ENCODE measurements at regions of chr6 and their contacts with region 1.

Region 1: DNA sequence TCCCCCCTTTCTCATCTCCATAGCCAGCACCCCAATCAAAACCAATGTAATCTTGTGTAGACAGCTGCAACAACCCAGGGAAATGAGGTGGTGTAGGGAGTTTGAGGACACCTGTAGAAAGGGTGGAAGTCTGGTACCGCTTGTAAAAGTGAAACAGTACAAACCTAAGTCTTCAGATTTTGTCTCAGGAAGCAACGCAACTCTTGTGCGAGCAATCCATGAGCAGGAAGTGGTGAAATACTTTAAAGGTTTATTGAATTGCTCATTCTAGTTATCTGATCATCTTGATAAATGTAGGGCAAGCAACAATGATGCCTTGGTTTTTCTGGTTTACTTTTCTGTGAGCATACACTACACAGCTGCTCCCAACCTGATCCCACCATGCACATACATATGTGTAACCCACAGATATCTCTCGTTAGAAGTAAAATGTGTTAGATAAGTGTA is 71.1 kb upstream of the THEMIS start:
- DNase-seq: peak; percentile 24 to 91 (median 53)
- ATAC-seq: peak; percentile 85
- H3K4me3 ChIP-seq: peak overlapping the region; percentile 35 to 55
- H3K4me3 Mint-ChIP-seq: peak overlapping the region; percentile 84
- H3K27ac ChIP-seq: peak overlapping the region; percentile 79 to 85
- H3K27ac Mint-ChIP-seq: peak overlapping the region; percentile 97
- H3K4me1 ChIP-seq: peaks cover 80% of the 10 kb centered on the region
- H3K4me1 Mint-ChIP-seq: peaks cover 83% of the 10 kb centered on the region
- H3K27me3 ChIP-seq: no peaks in the 10 kb centered on the region
- H3K27me3 Mint-ChIP-seq: no peaks in the 10 kb centered on the region
- CTCF ChIP-seq: no peak

Region 2: DNA sequence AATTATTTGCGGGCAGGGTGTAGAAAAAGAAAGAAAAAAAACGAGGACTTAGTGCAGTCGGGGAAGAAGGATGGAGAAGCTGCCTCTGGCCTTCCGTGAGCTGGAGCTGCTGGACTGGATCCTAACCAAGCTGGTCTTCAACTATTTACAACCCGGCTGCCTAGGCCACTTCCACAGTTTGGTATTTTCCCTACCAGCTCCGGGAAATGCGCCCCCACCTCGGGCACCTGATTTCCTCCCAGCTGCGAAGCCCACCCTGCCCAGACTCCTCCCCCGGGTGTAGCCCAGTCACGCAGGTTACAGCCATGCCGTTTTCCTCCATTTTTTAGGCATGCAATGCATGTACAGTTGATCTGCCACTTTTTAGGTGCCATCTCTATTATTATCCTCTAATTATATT is 92.3 kb before region 1 on chr6:
- CTCF ChIA-PET with region 1: no interaction called
- POLR2A ChIA-PET with region 1: no interaction called
- intact Hi-C with region 1: loop called in 1 of 2 experiments (anchors 5 kb)
- DNase-seq: peak in 6 of 9 experiments; percentile 21 to 71 (median 46)
- ATAC-seq: peak; percentile 60
- H3K4me3 ChIP-seq: peak overlapping the region; percentile 19 to 24
- H3K4me3 Mint-ChIP-seq: peak overlapping the region; percentile 72
- H3K27ac ChIP-seq: peak overlapping the region in 1 of 2 experiments; percentile 40
- H3K27ac Mint-ChIP-seq: peak overlapping the region; percentile 88
- H3K4me1 ChIP-seq: peaks cover 84% of the 10 kb centered on the region
- H3K4me1 Mint-ChIP-seq: peaks cover 84% of the 10 kb centered on the region
- H3K27me3 ChIP-seq: no peaks in the 10 kb centered on the region
- H3K27me3 Mint-ChIP-seq: no peaks in the 10 kb centered on the region
- CTCF ChIP-seq: no peak

Region 3: GRCh38 chr6:127907960-127908640 is 63.9 kb before region 1 on chr6:
- CTCF ChIA-PET with region 1: interaction called, 3 read pairs
- POLR2A ChIA-PET with region 1: interaction called, 15 read pairs
- intact Hi-C with region 1: no loop called
- DNase-seq: peak in 2 of 9 experiments; percentile 48 to 66
- ATAC-seq: peak; percentile 69
- H3K4me3 ChIP-seq: peak overlapping the region; percentile 25 to 52
- H3K4me3 Mint-ChIP-seq: peak overlapping the region; percentile 80
- H3K27ac ChIP-seq: peak overlapping the region; percentile 42 to 88
- H3K27ac Mint-ChIP-seq: peak overlapping the region; percentile 88
- H3K4me1 ChIP-seq: peaks cover 24% of the 10 kb centered on the region
- H3K4me1 Mint-ChIP-seq: peaks cover 68% of the 10 kb centered on the region
- H3K27me3 ChIP-seq: no peaks in the 10 kb centered on the region
- H3K27me3 Mint-ChIP-seq: no peaks in the 10 kb centered on the region
- CTCF ChIP-seq: no peak

Region 4: GRCh38 chr6:127938701-127939100 is 33.3 kb before region 1 on chr6:
- CTCF ChIA-PET with region 1: interaction called, 3 read pairs
- POLR2A ChIA-PET with region 1: interaction called, 4 read pairs
- intact Hi-C with region 1: loop called (anchors 1 to 5 kb)
- DNase-seq: peak in 2 of 9 experiments; percentile 39 to 61
- ATAC-seq: no peak
- H3K4me3 ChIP-seq: no peak overlapping the region
- H3K4me3 Mint-ChIP-seq: no peak overlapping the region
- H3K27ac ChIP-seq: no peak overlapping the region
- H3K27ac Mint-ChIP-seq: peak overlapping the region; percentile 10
- H3K4me1 ChIP-seq: peaks cover 54% of the 10 kb centered on the region
- H3K4me1 Mint-ChIP-seq: peaks cover 68% of the 10 kb centered on the region
- H3K27me3 ChIP-seq: no peaks in the 10 kb centered on the region
- H3K27me3 Mint-ChIP-seq: no peaks in the 10 kb centered on the region
- CTCF ChIP-seq: no peak

Region 5: GRCh38 chr6:128005009-128005408 is 33.0 kb after region 1 on chr6:
- CTCF ChIA-PET with region 1: no interaction called
- POLR2A ChIA-PET with region 1: no interaction called
- intact Hi-C with region 1: loop called in 1 of 2 experiments (anchors 5 kb)
- DNase-seq: no peak
- ATAC-seq: no peak
- H3K4me3 ChIP-seq: no peak overlapping the region
- H3K4me3 Mint-ChIP-seq: no peak overlapping the region
- H3K27ac ChIP-seq: no peak overlapping the region
- H3K27ac Mint-ChIP-seq: no peak overlapping the region
- H3K4me1 ChIP-seq: peaks cover 15% of the 10 kb centered on the region
- H3K4me1 Mint-ChIP-seq: peaks cover 38% of the 10 kb centered on the region
- H3K27me3 ChIP-seq: no peaks in the 10 kb centered on the region
- H3K27me3 Mint-ChIP-seq: no peaks in the 10 kb centered on the region
- CTCF ChIP-seq: no peak

Region 6: DNA sequence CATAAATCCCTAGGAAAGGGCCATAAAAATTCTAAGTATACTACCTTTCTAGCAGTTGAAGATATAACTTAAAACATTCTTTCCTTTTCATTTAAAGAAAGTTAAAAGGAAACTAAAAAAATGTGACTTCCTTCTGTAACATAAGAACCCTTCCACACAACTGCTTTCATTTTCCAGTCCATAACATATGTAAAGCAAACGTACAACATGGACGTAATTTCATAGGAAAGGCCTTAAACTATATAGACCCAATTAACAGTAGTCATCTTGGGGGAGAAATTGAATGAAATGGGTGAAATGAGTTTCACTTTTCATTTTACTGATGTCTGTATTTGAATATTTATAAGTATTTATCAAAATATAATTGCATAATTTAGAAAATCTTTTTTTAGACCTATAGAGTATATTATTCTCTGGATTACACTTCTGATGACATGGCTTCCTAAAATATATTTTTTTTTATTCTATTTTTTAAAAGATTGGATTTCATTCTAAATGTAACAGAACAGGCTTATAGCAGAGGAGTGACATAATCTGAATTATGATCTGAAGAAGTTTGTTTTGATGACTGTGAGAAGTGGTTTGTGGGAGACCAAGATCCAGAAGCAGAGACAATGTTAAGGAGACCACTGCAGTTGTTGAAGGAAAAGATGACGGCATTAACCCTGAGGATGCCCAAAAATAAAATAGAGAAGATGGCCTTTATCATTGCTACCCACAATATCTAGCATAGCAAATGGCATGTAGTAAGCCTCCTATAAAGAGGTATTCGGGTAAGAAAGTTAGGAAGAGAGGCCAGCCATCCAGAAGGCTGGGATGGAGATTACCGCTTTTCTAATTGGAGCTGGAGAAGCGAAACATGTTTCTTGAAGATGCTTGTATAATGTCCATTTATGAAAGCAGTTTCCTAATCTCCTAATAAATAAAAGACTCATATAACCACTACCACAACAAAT is 288.0 kb after region 1 on chr6:
- CTCF ChIA-PET with region 1: no interaction called
- POLR2A ChIA-PET with region 1: no interaction called
- intact Hi-C with region 1: loop called in 1 of 2 experiments (anchors 10 kb)
- DNase-seq: peak in 2 of 9 experiments; percentile 31 to 63
- ATAC-seq: peak; percentile 77
- H3K4me3 ChIP-seq: peak overlapping the region; percentile 31 to 42
- H3K4me3 Mint-ChIP-seq: peak overlapping the region; percentile 83
- H3K27ac ChIP-seq: peak overlapping the region; percentile 49 to 69
- H3K27ac Mint-ChIP-seq: peak overlapping the region; percentile 89
- H3K4me1 ChIP-seq: peaks cover 18% of the 10 kb centered on the region
- H3K4me1 Mint-ChIP-seq: peaks cover 29% of the 10 kb centered on the region
- H3K27me3 ChIP-seq: no peaks in the 10 kb centered on the region
- H3K27me3 Mint-ChIP-seq: no peaks in the 10 kb centered on the region
- CTCF ChIP-seq: no peak

Measured in CD8-positive, alpha-beta T cell (primary cell).